Activated CD8-positive, alpha-beta memory T cell treated with anti-CD3 and anti-CD28 coated beads, Interleukin-2, amount 10 ng/mL, durations not matched to agents 7 days and 5 days (primary cell): ENCODE measurements at regions of chr2 and their contacts with region 1.

Region 1: GRCh38 chr2:240434728-240435456 is 571 bp upstream of the GPC1 start:
- DNase-seq: peak; percentile 94
- ATAC-seq: peak; percentile 86
- H3K4me3 Mint-ChIP-seq: peak overlapping the region; percentile 69
- H3K27ac Mint-ChIP-seq: peak overlapping the region; percentile 72
- H3K4me1 Mint-ChIP-seq: peaks cover 5% of the 10 kb centered on the region
- H3K27me3 Mint-ChIP-seq: peaks cover 16% of the 10 kb centered on the region

Region 2: GRCh38 chr2:240232961-240233893 is 201.7 kb before region 1 on chr2:
- CTCF ChIA-PET with region 1: interaction called, 12 read pairs
- DNase-seq: peak; percentile 74
- ATAC-seq: peak; percentile 66
- H3K4me3 Mint-ChIP-seq: no peak overlapping the region
- H3K27ac Mint-ChIP-seq: no peak overlapping the region
- H3K4me1 Mint-ChIP-seq: peaks cover 2% of the 10 kb centered on the region
- H3K27me3 Mint-ChIP-seq: peaks cover 2% of the 10 kb centered on the region

Region 3: DNA sequence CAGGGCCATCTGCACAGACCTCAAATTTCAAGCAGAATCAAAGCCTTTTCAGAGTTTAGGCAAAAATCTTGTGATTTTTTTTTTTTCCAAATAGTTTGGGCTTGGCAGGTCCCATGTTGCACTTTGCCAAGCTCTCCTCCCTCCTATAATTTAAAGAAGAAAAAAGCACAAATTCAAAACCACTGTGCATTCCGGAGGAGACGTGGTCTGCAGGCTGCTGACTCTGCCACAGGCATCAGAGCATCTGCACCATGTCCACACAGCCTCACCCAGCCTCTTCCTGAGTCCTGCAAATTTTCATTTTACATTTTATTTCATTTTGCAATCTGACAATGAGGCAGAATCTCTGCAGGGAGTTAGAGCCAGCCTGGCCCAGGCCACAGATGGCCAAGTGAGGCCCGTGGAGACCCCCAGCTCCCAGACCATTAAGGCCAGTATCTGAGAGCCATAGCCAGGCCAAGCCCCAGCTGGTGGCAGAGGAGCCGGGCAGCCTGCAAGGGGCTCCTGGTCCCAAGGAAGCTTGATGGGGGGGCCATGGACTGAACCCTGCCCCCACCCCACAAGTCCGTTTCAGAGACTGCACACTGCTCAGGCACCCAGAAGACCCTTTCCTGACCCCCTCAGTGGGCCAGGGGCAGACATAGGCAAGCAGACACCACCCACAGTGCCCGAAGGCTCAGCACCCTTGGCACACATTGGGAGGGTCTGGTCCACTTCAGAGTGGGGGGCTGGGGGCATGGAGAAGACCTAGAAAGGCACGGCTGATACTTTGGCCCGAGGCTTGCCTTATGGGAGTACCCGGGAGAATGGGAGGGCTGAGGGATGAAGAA is 15.0 kb before region 1 on chr2:
- CTCF ChIA-PET with region 1: no interaction called
- DNase-seq: no peak
- ATAC-seq: no peak
- H3K4me3 Mint-ChIP-seq: no peak overlapping the region
- H3K27ac Mint-ChIP-seq: no peak overlapping the region
- H3K4me1 Mint-ChIP-seq: no peaks in the 10 kb centered on the region
- H3K27me3 Mint-ChIP-seq: peaks cover 3% of the 10 kb centered on the region